OCI-LY7 (cell line): ENCODE measurements at regions of chr11 and their contacts with region 1.

Region 1: DNA sequence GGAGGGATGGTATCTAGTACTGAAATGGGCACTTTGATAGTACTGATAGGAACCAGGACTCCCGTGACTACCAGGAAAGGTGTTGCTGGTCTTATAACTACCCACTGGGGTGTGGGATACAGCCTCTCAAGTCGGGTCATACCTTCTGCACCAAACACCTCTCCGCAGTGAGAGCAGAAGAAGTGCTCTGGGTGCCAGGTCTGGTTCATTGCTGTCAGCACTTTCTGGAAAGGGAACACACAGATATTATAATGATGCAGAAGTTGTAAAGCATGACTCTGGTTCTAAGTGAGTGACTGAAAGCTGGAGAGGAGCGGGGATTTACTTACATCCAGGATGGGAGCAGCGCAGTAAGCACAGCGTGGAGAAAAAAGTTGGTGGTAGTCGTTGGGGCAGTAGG is 26.0 kb downstream of the LPXN start:
- DNase-seq: no peak
- H3K4me3 ChIP-seq: no peak overlapping the region
- H3K27ac ChIP-seq: no peak overlapping the region
- H3K4me1 ChIP-seq: no peaks in the 10 kb centered on the region
- CTCF ChIP-seq: no peak

Region 2: DNA sequence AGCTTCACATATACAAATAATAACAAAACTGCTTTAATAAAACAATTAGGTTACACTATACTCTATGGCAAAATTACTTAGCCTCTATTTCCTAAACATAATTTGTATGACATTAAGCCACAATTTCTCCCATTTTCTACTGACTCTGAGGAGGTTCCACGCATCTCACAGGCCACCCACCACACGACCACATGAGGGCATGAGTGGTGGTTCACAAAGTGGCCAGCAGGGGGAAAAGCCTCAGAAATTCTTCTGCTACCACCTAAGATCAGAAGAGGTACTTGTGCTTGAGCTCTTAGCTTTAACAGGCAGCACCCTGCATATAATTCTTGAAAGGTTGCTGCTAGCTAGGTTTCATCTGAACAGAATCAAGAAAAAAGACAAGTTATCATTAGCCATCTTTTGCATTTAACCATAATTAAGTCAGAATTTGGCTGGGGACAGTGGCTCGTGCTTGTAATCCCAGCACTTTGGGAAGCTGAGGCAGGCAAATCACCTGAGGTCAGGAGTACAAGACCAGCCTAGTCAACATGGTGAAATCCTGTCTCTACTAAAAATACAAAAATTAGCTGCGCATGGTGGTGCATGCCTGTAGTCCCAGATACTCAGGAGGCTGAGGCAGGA is 18.4 kb after region 1 on chr11:
- CTCF ChIA-PET with region 1: interaction called, 3 read pairs
- POLR2A ChIA-PET with region 1: interaction called, 17 read pairs
- intact Hi-C with region 1: no loop called
- DNase-seq: peak; percentile 82
- H3K4me3 ChIP-seq: no peak overlapping the region
- H3K27ac ChIP-seq: peak overlapping the region; percentile 26
- H3K4me1 ChIP-seq: peaks cover 45% of the 10 kb centered on the region
- CTCF ChIP-seq: peak; percentile 93